A673 (cell line): ENCODE measurements at regions of chr5 and their contacts with region 1.

Region 1: DNA sequence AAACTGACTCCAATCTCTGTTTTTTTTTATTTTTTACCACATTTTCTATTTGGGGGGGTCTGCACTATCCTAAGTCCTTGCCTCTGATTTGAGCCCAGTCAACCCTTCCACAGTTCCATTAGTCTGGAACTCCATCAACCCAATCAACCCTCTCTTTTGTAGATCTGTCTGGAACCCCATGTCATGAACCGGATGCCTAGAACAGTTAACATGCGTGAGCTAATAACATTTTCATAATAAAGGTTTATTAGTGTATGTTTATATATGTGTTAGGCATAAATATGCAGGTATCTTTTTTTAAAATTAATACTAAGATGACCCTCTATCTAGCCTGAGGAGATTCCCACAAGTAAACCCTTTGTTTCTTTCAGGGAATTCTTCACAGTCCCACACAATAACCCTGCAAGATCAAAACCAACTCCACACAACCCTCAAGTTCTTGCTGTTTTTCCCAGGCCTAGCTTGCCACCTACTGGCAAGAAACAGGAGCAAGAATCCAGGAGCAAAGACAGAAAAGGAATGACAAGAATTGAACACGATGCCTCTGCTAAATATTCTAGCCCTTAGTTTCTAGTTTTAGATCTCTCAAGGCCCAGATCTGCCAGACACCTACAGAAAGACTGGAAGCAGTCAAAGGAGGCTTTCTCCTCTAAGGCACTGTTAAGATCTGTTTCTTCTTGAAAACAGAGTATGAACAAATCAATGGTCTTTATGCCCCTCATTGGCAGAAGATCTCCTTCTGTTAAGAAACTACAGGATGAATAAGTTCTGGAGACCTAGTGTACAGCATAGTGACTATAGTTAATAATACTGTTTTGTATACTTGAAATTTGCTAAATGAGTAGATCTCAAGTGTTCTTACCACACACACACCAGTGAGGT is 100.4 kb downstream of the TRIM36 start:
- DNase-seq: peak; percentile 74
- H3K4me3 ChIP-seq: no peak overlapping the region
- H3K27ac ChIP-seq: no peak overlapping the region
- H3K4me1 ChIP-seq: no peaks in the 10 kb centered on the region
- H3K27me3 ChIP-seq: no peaks in the 10 kb centered on the region
- CTCF ChIP-seq: peak; percentile 79

Region 2: GRCh38 chr5:114803353-114803752 is 266.0 kb before region 1 on chr5:
- CTCF ChIA-PET with region 1: no interaction called
- POLR2A ChIA-PET with region 1: no interaction called
- intact Hi-C with region 1: loop called (anchors 10 kb)
- DNase-seq: peak; percentile 3
- H3K4me3 ChIP-seq: no peak overlapping the region
- H3K27ac ChIP-seq: no peak overlapping the region
- H3K4me1 ChIP-seq: no peaks in the 10 kb centered on the region
- H3K27me3 ChIP-seq: no peaks in the 10 kb centered on the region
- CTCF ChIP-seq: 0 out of 2 replicates have a peak, but pooled peaks have one; percentile 17

Region 3: DNA sequence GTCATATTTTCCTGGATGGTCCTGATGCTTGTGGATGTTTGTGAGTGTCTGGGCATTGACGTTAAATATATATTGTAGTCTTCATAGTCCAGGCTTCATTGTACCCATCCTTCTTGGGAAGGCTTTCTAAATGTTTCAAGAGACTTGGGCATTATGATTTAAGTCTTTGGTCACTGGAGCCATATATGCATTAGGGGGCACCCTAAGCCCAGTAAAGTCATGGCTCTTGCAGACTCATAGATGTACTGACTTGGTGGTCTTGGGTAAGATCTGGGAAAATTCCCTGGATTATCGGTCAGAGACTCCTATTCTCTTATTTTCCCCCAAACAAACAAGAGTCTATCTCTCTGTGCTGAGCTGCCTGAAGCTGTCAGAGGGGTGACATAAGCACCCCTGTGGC is 170.7 kb before region 1 on chr5:
- CTCF ChIA-PET with region 1: no interaction called
- POLR2A ChIA-PET with region 1: no interaction called
- intact Hi-C with region 1: loop called (anchors 5 kb)
- DNase-seq: peak; percentile 16
- H3K4me3 ChIP-seq: no peak overlapping the region
- H3K27ac ChIP-seq: no peak overlapping the region
- H3K4me1 ChIP-seq: no peaks in the 10 kb centered on the region
- H3K27me3 ChIP-seq: no peaks in the 10 kb centered on the region
- CTCF ChIP-seq: no peak

Region 4: DNA sequence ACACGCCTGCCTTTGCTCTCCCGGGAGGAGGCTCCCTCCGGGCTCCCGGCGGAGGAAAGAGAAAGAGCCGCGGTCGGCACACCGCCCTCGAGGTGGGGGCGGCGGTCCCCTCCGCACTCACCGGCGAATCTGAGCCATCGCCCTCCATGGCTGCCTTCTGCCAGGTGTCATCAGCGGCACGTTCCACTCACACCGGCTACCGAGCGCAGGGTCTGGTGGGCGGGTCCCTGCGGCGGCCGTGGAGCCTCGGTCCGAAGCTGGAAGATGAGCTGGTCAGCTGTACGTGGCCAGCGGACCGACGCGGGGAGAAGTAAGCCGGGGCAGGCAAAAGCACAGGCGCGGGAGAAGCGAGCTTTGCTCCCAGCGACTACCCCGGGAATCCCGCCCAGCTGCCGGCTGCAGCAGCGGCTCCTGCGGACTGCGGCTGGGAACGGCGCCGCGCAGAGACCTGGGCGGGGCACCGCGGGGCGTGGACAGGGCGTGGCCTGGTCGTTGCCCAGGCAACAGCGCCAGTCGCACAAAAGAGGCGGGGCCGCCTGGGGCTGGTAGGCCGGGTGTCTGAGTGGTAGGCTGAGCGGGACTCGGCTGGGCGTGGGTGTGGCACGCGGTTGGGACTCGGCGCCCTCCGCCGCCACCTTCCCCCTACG is 100.3 kb after region 1 on chr5 and contains the start of gene TRIM36:
- CTCF ChIA-PET with region 1: no interaction called
- POLR2A ChIA-PET with region 1: no interaction called
- intact Hi-C with region 1: no loop called
- DNase-seq: peak; percentile 97
- H3K4me3 ChIP-seq: peak within 1 kb of the TSS; percentile 96
- H3K27ac ChIP-seq: peak within 1 kb of the TSS; percentile 75
- H3K4me1 ChIP-seq: no peaks in the 10 kb centered on the region
- H3K27me3 ChIP-seq: no peaks in the 10 kb centered on the region
- CTCF ChIP-seq: peak; percentile 44
- total RNA-seq, gene TRIM36: 16.8 and 17.5 TPM in 2 replicates

Region 5: GRCh38 chr5:115686051-115686737 is 616.9 kb after region 1 on chr5:
- CTCF ChIA-PET with region 1: no interaction called
- POLR2A ChIA-PET with region 1: no interaction called
- intact Hi-C with region 1: no loop called
- DNase-seq: peak; percentile 11
- H3K4me3 ChIP-seq: no peak overlapping the region
- H3K27ac ChIP-seq: no peak overlapping the region
- H3K4me1 ChIP-seq: no peaks in the 10 kb centered on the region
- H3K27me3 ChIP-seq: peaks cover 17% of the 10 kb centered on the region
- CTCF ChIP-seq: no peak